ENCODE measurements at regions of chr1 and their contacts with region 1.

Region 1: DNA sequence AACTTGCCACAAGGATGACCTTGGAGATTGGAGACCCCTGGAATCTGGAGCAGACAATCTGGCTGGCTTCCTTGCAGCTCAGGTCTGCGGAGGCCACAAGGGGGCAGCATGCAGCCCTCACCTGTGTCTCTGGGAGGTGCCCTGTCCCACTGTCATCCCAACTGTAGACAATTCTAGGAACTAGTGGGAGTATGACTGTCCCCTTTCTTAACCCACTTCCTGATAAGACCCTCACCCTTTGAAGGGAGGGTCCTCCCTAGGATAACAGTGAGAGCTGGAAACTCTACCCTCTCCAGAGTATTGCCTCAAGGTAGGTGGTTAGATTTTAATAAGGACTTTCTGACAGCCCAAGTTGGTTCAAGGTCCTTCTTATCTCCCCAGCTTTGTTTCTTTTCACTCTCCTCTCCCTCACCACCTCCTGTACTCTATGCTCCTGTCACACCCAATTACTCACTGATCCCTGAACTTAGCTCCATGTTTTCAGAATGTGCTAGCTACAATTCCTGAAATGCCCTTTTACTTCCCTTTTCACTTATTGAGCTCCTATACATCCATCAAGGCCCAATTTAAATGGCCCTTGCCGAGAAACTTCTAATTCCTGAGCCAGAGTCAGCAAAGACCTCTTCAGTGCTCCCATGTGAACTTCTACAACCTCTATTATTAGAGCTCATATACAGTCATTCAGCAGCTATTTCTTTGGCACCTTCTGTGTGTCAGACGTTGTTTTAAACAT is 9.2 kb upstream of the KCNQ4 start:
- DNase-seq: no peak

Region 2: DNA sequence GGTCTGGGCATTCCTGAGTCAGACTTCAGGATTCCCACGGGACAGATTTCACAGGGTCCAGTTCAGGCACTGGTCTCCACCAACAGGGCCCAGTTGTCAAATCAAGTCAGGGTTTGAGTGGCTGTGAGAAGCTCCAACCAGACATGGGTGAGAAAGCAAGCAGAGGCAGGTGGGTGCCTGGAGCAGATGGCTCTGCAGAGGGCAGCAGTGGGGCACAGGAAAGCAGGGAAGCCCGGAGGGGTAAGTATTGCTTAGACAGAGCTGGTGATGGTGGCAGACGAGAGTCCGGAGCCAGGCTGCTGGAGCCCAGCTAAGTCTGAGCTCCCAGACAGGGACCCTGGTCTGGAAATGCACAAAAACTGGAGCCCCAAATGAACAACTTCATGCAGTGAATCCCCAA is 149.4 kb before region 1 on chr1:
- intact Hi-C with region 1: loop called (anchors 5 kb)
- DNase-seq: peak; percentile 61

Region 3: GRCh38 chr1:40691538-40692428 is 82.6 kb before region 1 on chr1 and contains the start of gene NFYC:
- intact Hi-C with region 1: loop called (anchors 5 kb)
- DNase-seq: peak; percentile 98
- total RNA-seq, gene NFYC: 61.7 TPM

Region 4: DNA sequence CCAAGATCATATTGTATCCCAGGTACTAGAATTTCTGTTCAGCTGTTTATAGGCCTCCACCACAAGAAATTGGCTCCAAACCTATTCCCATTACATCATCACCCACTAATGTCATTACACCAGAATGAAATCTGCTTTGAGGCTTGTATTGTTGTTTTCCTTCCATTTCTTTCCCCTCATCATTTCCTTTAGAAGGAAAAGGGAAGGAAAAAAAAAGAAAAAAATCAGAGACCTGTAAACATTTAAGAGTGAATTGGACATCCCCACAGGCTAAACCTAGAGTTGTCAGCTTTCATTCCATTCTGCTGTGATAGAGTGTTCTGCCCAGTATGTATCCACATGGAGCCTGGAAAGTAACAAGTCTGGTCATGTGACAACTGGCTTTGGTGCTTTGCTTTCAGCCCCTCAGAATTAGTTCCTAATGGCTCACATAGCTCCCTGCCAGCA is 38.3 kb before region 1 on chr1:
- intact Hi-C with region 1: loop called (anchors 5 kb)
- DNase-seq: no peak

Region 5: DNA sequence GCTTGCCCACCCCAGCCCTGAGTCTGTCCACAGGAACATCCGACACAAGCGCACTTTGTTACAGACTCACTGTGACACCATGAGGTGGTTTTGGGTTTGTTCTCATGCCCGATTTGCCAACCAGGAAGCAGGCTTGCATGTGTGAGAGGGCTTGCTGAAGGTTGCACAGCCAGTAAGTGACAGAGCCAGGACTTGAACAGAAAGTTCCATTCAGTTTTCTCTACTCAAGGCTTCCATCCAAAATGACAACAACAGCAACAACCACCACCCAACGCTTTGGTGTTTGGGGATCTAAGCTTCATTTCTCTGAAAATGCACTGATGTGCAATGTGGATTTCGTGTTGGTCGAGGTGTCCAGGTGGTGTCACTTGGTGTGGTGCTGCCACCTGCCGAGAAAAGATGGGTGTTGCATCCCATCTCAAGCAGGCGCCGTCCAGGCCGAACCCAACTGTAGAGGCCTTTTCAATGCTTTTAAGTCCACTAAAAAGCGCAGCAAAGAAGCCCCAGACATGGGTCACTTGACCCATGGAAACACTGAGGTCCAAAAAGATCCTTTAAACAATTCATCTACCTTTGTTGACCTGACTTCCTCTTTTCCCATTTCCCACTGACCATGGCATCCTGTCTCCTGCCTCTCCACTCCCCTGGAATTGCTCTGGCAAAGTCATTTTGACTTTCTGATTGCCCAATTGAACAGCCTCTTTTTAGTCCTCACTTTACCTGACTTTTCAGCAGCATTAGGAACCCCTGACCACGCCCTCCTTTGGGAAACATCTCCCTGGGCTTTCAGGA is 75.6 kb after region 1 on chr1:
- intact Hi-C with region 1: loop called (anchors 2 kb)
- DNase-seq: peak; percentile 86

Region 6: GRCh38 chr1:40951943-40952743 is 177.7 kb after region 1 on chr1:
- intact Hi-C with region 1: loop called (anchors 5 kb)
- DNase-seq: peak; percentile 85

Measured in cardiac septum (tissue), 1 donor.